GM23248 (cell line): ENCODE measurements at regions of chr5 and their contacts with region 1.

Region 1: DNA sequence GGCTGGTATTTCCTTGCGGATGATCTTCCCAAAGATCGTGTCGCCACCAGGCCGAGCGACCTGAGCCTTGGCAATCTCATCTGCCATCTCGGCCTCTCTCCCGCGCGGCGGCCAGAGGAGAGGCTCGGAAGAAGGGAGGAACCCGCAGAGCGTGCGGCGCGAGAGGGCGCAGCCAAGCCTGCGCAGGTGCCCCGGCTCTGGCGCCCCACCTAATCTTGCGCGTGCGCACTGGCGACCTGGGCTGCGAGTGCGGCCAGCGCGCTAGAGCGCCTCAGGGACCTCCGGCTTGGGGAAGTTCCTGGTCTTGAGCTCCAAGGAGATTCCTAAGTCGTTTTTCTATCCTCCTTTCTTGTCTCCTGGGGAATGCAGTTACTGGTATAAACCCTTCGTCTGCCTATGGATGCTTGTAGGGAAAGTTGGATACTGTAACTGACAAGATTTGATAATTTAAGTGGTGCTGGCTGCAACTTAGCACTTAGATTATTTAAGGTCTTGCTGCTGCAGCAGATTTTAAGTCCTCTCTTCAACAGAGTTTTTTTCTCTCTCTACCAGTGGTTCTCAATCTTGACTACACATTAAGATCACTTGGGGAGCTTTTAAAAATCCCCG is at the start of gene HINT1:
- DNase-seq: peak; percentile 89
- H3K4me3 ChIP-seq: peak within 1 kb of the TSS; percentile 93
- H3K27ac ChIP-seq: peak within 1 kb of the TSS; percentile 81
- H3K4me1 ChIP-seq: peaks cover 14% of the 10 kb centered on the region
- H3K27me3 ChIP-seq: no peaks in the 10 kb centered on the region
- total RNA-seq, gene HINT1: 150 and 184 TPM in 2 replicates

Region 2: GRCh38 chr5:131042021-131042789 is 123.0 kb before region 1 on chr5:
- in situ Hi-C with region 1: no loop called
- DNase-seq: no peak
- H3K4me3 ChIP-seq: no peak overlapping the region
- H3K27ac ChIP-seq: no peak overlapping the region
- H3K4me1 ChIP-seq: no peaks in the 10 kb centered on the region
- H3K27me3 ChIP-seq: no peaks in the 10 kb centered on the region

Region 3: GRCh38 chr5:131382407-131383395 is 217.5 kb after region 1 on chr5:
- in situ Hi-C with region 1: loop called (anchors 10 kb)
- DNase-seq: peak; percentile 51
- H3K4me3 ChIP-seq: no peak overlapping the region
- H3K27ac ChIP-seq: no peak overlapping the region
- H3K4me1 ChIP-seq: 0 out of 2 replicates have a peak, but pooled peaks cover 5% of the 10 kb centered on the region
- H3K27me3 ChIP-seq: no peaks in the 10 kb centered on the region